Activated T-helper 2 cell treated with anti-CD3 and anti-CD28 coated beads, Interferon-gamma antibody, Interleukin-2, Interleukin-4, amounts not matched to agents 10 μg/mL and 5 μg/mL and 100 μg/mL, durations not matched to agents 14 hours and 24 hours and 36 hours (primary cell): ENCODE measurements at regions of chr1 and their contacts with region 1.

Region 1: DNA sequence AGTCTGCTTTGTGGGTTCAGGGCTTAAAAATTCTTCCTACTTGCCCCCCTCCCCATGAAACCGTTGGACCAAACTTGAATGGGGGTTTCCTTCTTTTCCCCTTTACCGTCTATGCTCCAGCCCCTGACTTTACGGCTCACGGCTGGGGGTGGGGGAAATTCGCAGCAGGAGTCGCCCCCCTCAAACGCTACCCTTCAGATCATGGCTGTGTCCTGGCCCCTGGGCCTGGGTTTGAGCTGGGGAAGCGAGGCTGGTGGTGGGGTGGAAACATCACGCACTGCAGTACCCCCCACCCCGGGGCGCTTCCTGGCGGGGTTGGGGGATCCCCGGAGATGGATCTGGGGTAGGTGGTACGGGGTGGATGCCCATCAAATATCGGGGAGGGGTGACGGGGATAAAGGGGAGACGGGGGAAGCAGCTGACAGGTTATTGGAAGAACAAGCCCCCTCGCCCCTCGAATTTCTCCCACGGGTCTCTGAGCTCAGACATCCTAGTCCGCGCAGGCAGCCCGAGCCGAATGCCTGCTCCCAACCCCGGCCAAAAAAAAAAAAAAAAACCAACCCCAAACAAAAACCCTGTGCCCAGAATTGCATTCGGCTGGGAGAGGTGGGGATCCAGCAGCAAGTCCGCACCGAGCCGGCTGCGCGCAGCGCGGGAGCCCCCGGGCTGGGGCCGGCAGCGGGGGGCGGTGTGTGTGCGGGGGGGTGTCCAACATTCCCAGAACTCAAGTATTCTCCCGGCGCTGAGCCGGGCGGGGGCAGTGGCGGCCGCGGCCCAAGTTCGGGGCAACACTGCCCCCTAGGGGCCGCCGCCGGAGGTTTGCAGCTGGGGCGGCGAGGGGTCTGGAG is 59.0 kb upstream of the ACOT11 start:
- DNase-seq: peak; percentile 65
- H3K4me3 Mint-ChIP-seq: peak overlapping the region; percentile 81
- H3K27ac Mint-ChIP-seq: peak overlapping the region; percentile 74
- H3K4me1 Mint-ChIP-seq: peaks cover 19% of the 10 kb centered on the region
- H3K27me3 Mint-ChIP-seq: peaks cover 36% of the 10 kb centered on the region

Region 2: DNA sequence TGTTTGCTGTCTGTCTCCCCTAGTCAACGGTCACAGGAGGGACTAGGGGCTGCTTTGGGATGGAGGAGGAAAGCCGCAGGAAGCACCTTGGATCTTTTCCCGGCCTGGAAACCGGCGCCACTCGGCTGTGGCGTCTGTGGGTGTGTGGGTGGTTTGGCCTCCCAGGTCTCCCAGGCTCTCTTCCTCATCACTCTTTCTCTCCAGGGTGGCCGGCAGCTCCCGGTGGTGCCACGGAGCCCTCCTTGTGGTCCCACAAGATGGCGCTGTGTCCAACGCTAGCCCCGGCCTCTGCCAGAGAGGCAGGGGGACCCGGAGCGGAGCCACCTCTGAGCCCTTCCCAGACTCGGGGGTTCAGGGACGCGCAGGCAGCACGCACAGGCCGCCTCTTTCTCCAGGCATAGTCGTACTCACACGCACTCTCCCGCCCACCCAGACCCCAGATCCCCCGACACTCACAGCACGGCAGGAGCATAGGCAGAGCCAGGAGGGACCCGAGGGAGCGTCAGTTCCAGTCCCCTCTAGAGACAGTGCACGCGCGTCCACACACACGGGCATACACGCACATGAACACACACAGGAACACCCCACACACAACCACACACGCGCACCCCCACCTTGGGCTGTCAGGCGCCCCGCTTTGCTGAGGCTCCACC is 367.4 kb before region 1 on chr1:
- intact Hi-C with region 1: loop called (anchors 1 kb)
- DNase-seq: peak; percentile 55
- H3K4me3 Mint-ChIP-seq: no peak overlapping the region
- H3K27ac Mint-ChIP-seq: no peak overlapping the region
- H3K4me1 Mint-ChIP-seq: peaks cover 2% of the 10 kb centered on the region
- H3K27me3 Mint-ChIP-seq: peaks cover 2% of the 10 kb centered on the region

Region 3: GRCh38 chr1:54199765-54200518 is 289.1 kb before region 1 on chr1 and contains the starts of genes CYB5RL and MRPL37:
- intact Hi-C with region 1: loop called (anchors 2 kb)
- DNase-seq: peak; percentile 88
- H3K4me3 Mint-ChIP-seq: peak within 1 kb of the TSS; percentile 90
- H3K27ac Mint-ChIP-seq: peak within 1 kb of the TSS; percentile 80
- H3K4me1 Mint-ChIP-seq: peaks cover 31% of the 10 kb centered on the region
- H3K27me3 Mint-ChIP-seq: no peaks in the 10 kb centered on the region
- total RNA-seq, gene CYB5RL: 10.2 and 12.2 TPM in 2 replicates
- total RNA-seq, gene MRPL37: 130 and 134 TPM in 2 replicates

Region 4: GRCh38 chr1:54277451-54278341 is 211.3 kb before region 1 on chr1:
- intact Hi-C with region 1: loop called (anchors 1 kb)
- DNase-seq: no peak
- H3K4me3 Mint-ChIP-seq: peak overlapping the region; percentile 59
- H3K27ac Mint-ChIP-seq: peak overlapping the region; percentile 95
- H3K4me1 Mint-ChIP-seq: peaks cover 54% of the 10 kb centered on the region
- H3K27me3 Mint-ChIP-seq: no peaks in the 10 kb centered on the region

Region 5: GRCh38 chr1:54364995-54365394 is 124.0 kb before region 1 on chr1:
- intact Hi-C with region 1: loop called (anchors 2 kb)
- DNase-seq: no peak
- H3K4me3 Mint-ChIP-seq: no peak overlapping the region
- H3K27ac Mint-ChIP-seq: no peak overlapping the region
- H3K4me1 Mint-ChIP-seq: peaks cover 34% of the 10 kb centered on the region
- H3K27me3 Mint-ChIP-seq: no peaks in the 10 kb centered on the region

Region 6: DNA sequence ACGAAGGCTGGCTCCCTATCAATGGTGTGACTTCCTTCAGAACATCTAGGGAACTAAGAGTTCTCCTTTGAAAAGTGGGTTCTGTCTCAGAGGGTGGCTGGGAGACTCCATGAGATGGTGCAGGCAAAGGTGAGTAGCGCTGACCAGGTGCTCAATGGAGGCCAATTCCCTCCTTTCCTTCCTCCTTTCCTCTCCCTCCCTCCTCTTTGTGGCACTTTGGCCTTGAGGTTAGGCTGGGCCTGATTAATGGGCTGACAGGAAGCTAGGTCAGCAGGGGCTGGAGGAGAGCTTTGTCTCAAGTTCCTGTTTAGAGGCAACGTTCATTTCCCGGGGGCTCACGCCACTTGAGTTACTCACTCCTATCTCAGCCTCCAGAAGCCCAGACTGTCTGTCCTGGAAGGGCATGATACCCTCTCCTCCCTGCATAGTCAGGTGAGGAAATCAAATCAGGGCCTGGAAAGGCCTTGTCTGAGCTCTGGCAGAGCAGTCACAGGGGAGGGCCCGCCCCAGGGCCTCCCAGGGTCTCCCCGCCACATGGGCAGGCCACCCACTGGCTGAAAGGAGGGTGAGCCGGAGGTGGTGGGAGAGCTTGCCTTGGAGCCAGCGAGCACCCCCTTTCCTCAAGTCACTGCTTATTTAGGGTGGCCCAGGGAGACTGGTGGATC is 24.4 kb before region 1 on chr1:
- intact Hi-C with region 1: loop called (anchors 1 kb)
- DNase-seq: no peak
- H3K4me3 Mint-ChIP-seq: no peak overlapping the region
- H3K27ac Mint-ChIP-seq: no peak overlapping the region
- H3K4me1 Mint-ChIP-seq: peaks cover 19% of the 10 kb centered on the region
- H3K27me3 Mint-ChIP-seq: peaks cover 5% of the 10 kb centered on the region

Region 7: DNA sequence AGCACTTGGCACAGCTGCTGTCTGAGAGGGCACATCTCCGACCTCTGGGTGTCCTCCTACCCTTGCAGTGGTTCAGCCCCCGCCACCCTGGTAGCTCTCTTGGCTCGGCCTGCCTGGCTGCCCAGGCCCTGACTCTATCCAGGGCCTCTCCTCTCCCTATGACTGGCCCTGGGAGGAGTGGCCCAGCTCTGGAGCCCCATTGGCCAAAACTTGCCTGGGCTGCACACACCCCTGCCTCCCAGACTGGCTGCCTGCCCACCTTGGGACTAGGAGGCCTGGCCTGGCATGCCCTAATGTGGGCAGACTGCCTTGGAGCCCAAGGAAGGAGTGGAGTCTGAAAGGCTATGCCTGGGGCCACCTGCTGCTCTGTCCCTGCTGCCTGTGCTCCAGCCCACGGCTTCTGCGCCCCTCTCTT is 92.6 kb after region 1 on chr1:
- intact Hi-C with region 1: no loop called
- DNase-seq: no peak
- H3K4me3 Mint-ChIP-seq: no peak overlapping the region
- H3K27ac Mint-ChIP-seq: no peak overlapping the region
- H3K4me1 Mint-ChIP-seq: no peaks in the 10 kb centered on the region
- H3K27me3 Mint-ChIP-seq: no peaks in the 10 kb centered on the region